Activated T-helper 1 cell treated with anti-CD3 and anti-CD28 coated beads, Interleukin-12 subunit alpha, Interleukin-12 subunit beta, Interleukin-2, Interleukin-4 antibody, amounts not matched to agents 30 ng/mL and 10 ng/mL and 1 ng/mL, durations not matched to agents 14 hours and 24 hours and 36 hours (primary cell): ENCODE measurements at regions of chr20 and their contacts with region 1.

Region 1: DNA sequence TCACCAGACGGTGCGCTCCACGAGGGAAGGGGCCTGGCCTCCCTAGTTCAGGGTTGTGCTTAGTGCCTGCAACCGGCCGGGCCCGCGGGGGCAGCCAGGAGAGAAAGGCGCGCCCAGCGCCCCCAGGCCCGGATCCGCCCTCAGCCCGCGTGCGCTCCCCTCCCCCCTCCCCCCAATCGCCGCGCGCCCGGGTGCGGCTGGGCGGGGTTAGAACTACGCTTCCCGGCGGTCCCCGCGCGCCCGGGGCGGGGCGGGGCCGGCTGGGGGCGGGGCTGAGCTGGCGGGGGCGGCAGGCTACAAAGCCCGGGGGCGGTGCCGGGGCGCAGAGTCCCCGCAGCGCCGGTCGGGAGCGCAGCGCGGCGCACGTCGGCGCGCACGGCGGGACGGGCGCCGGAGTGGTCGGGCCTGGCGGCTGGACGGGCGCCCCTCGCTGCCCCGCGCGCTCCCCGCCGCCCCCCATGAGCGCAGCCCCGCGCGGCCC is at the start of gene RBM38:
- DNase-seq: peak; percentile 69
- H3K4me3 Mint-ChIP-seq: peak within 1 kb of the TSS; percentile 94
- H3K27ac Mint-ChIP-seq: peak within 1 kb of the TSS; percentile 94
- H3K4me1 Mint-ChIP-seq: peaks cover 31% of the 10 kb centered on the region
- H3K27me3 Mint-ChIP-seq: no peaks in the 10 kb centered on the region
- total RNA-seq, gene RBM38: 90.4 and 92.5 TPM in 2 replicates

Region 2: GRCh38 chr20:57351042-57351783 is 39.9 kb before region 1 on chr20 and contains the start of gene RAE1:
- intact Hi-C with region 1: loop called (anchors 1 kb)
- DNase-seq: peak; percentile 89
- H3K4me3 Mint-ChIP-seq: peak within 1 kb of the TSS; percentile 96
- H3K27ac Mint-ChIP-seq: peak within 1 kb of the TSS; percentile 89
- H3K4me1 Mint-ChIP-seq: peaks cover 32% of the 10 kb centered on the region
- H3K27me3 Mint-ChIP-seq: peaks cover 2% of the 10 kb centered on the region
- total RNA-seq, gene RAE1: 54.4 and 59.2 TPM in 2 replicates

Region 3: GRCh38 chr20:57619051-57619834 is 228.1 kb after region 1 on chr20:
- intact Hi-C with region 1: loop called (anchors 2 kb)
- DNase-seq: peak; percentile 71
- H3K4me3 Mint-ChIP-seq: peak overlapping the region; percentile 72
- H3K27ac Mint-ChIP-seq: peak overlapping the region; percentile 86
- H3K4me1 Mint-ChIP-seq: peaks cover 51% of the 10 kb centered on the region
- H3K27me3 Mint-ChIP-seq: peaks cover 17% of the 10 kb centered on the region

Region 4: DNA sequence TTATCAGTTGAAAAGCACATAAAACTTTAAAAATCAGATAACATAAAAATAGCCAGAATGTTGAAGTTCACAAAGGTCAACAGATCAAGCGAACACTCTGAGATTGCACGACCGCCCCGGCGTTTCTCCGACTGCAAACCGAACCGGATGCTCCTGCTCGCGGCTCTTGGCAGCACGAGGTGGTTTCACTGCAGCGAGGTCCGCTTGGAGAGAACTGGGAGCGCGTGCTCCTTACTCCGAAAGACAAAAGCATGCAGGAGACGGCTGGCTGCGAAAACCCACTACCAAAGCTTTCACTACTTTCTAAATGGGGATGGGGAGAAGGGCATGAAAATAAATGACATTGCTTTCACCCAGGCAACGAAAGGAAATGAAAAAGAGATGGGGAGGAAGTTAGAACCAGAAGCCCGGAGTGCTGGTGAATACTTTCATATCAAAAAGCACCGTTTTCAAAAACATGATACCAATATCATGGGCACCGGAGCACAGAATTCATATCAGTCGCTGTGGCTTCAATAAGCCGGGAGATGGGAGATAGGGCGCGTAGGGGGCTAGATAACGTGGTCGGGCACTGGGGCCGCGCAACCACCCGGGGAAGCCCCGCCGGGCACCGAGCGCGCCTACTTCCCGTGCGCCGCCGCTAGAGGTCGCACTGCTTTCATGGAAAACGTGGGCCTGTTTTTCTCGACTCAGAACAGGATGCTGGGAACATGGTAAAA is 845.7 kb after region 1 on chr20:
- intact Hi-C with region 1: loop called (anchors 5 kb)
- DNase-seq: peak; percentile 79
- H3K4me3 Mint-ChIP-seq: peak overlapping the region; percentile 83
- H3K27ac Mint-ChIP-seq: peak overlapping the region; percentile 84
- H3K4me1 Mint-ChIP-seq: peaks cover 30% of the 10 kb centered on the region
- H3K27me3 Mint-ChIP-seq: no peaks in the 10 kb centered on the region

Region 5: DNA sequence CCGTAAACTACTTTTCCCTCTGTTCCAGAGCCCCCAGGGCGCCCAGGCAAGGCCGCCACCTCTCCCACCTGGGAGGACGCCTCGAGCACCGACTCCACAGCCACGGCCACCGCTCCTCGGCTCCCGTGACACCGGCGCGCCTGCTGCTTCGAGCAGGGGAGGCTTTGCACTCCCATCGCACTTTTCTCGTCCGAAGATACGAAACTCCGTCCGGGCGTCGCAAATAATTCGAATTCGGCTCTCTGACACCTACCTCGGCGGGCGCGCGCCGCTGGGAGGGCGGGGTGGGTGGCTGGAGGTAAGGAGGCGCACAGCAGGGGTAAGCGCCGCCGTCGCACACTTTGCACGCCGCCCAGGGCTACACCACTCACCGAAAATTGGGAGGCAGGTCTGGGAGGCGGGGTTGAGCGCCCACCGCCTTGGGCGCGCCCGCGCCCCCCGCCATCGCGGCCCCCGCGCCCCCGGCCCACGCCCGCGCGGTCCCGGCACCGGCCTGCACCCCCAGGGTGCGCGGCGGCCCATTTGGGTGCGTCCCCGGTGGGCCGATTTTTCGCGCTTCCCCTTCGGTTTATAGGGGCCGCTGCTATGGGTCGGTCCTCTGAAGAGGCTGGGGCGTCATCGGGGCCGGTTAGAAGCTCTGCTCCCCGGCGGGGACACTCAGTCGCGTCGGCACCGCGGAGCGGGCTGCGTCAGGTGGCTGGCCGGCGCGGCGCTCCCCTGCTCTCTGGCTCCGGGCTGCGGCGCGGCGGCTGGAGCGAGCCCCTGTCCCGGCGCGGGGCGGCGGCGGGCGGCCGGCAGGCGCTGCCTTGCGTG is 1497.6 kb after region 1 on chr20:
- intact Hi-C with region 1: loop called (anchors 5 kb)
- DNase-seq: peak; percentile 79
- H3K4me3 Mint-ChIP-seq: peak overlapping the region; percentile 81
- H3K27ac Mint-ChIP-seq: peak overlapping the region; percentile 40
- H3K4me1 Mint-ChIP-seq: peaks cover 33% of the 10 kb centered on the region
- H3K27me3 Mint-ChIP-seq: no peaks in the 10 kb centered on the region

Region 6: GRCh38 chr20:59159493-59160376 is 1768.6 kb after region 1 on chr20:
- intact Hi-C with region 1: loop called (anchors 10 kb)
- DNase-seq: peak; percentile 52
- H3K4me3 Mint-ChIP-seq: peak overlapping the region; percentile 78
- H3K27ac Mint-ChIP-seq: peak overlapping the region; percentile 92
- H3K4me1 Mint-ChIP-seq: peaks cover 80% of the 10 kb centered on the region
- H3K27me3 Mint-ChIP-seq: no peaks in the 10 kb centered on the region